ENCODE measurements at regions of chr2 and their contacts with region 1.

Region 1: GRCh38 chr2:154697418-154698252 is 860 bp upstream of the KCNJ3 start:
- DNase-seq: peak; percentile 46
- ATAC-seq: peak; percentile 75 to 81

Region 2: GRCh38 chr2:154452906-154453493 is 244.6 kb before region 1 on chr2:
- intact Hi-C with region 1: loop called in 1 of 2 experiments (anchors 5 kb)
- DNase-seq: no peak
- ATAC-seq: peak; percentile 12 to 44

Region 3: DNA sequence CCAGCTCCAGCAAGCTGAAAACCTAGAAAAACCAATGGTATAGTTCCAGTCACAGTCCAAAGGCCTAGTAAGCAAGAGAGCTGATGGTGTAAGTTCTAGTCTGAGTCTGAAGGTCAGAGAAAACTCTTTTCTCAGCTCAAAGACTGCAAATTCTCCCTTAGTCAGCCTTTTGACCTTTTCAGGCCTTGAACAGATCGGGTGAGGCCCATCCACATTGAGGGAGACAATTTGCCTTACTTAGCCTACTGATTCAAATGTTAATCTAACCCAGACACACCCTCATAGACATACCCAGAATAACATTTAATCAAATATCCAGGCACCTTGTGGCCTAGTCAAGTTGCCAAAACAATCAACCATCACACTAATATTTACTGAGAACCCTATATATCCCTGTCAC is 109.9 kb before region 1 on chr2:
- intact Hi-C with region 1: no loop called
- DNase-seq: no peak
- ATAC-seq: no peak

Region 4: DNA sequence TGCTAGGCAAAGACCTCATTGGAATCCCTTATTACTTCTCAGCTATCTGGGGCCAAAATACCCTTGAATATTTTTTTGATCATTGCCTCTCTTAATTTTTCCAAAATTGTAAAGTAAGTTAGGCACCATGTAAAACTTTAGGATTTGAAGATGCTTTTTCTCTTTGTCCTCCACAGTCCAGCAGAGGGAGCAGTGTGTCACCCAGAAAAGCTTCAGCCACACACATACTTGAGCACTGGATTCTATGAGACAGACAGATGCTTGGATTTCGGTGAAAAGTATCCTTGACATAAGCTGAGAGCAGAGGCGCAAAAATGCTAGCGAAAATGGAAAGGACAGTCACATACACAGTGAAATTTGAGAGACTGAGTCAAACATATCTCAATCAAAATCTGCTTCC is 73.8 kb before region 1 on chr2:
- intact Hi-C with region 1: loop called in 1 of 2 experiments (anchors 5 kb)
- DNase-seq: peak; percentile 21
- ATAC-seq: peak; percentile 66 to 88

Region 5: DNA sequence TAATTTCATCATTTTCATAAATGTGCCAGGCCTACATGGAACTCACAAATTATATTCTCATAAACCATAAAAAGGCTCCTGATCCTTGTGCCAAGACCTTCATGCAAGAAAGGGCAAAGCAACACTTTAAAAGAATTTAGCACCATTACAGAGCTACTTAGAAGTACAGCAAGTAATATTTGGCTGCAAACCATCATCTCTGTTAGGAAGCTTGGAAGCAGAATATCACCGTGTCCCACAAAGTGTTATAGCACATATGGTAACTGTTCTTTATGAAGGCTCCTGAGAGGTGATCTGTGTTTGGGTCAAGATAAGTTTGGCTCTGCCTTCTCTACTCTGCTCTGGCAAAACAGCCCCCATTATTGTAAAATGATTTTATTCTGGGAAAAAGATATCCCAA is 58.9 kb before region 1 on chr2:
- intact Hi-C with region 1: loop called in 1 of 2 experiments (anchors 2 kb)
- DNase-seq: no peak
- ATAC-seq: peak; percentile 58 to 83

Measured in left cardiac atrium (tissue), 4 donors.